ENCODE measurements at regions of chr6 and their contacts with region 1.

Region 1: GRCh38 chr6:118283766-118284165 is 264.3 kb upstream of the PLN start:
- DNase-seq: peak in 1 of 2 donors; percentile 32
- H3K4me3 ChIP-seq: peak overlapping the region in 1 of 2 donors; percentile 3
- H3K27ac ChIP-seq: peak overlapping the region in 1 of 2 donors; percentile 53
- H3K4me1 ChIP-seq: peaks cover 0 to 44% (median 20%) of the 10 kb centered on the region in 4 donors
- H3K27me3 ChIP-seq: no peaks in the 10 kb centered on the region
- CTCF ChIP-seq: peak; percentile 80

Region 2: DNA sequence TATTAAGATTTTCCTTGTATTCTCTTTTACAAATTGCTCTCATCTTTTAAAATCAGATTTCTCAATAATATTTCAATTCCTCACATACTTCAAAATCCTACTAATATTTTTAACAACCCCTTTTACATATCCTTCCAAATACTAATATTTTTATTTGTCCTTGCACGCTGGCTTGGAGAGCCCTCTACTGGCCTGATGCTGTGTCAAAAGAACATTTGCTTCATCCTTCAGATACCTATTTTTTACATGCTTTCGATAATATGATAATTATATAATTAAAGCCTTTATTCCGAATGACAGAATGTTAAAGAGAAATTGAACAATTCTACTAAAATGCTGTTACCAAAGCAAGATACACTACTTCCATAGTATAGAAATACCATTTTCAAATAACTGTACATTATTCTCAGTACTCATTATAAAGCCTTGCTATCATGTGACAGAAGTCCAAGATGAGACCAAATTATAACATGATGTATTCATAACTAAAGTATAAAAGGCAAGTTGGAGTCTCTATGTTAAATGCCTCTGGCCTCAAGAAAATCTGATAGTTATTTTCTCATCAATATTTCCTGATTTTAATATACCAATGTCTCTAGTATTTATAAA is 225.3 kb after region 1 on chr6:
- intact Hi-C with region 1: loop called (anchors 2 kb)
- DNase-seq: no peak
- H3K4me3 ChIP-seq: no peak overlapping the region
- H3K27ac ChIP-seq: no peak overlapping the region
- H3K4me1 ChIP-seq: peaks cover 0 to 57% (median 4%) of the 10 kb centered on the region in 4 donors
- H3K27me3 ChIP-seq: no peaks in the 10 kb centered on the region
- CTCF ChIP-seq: peak; percentile 69 to 71

Region 3: GRCh38 chr6:118551063-118552053 is 267.6 kb after region 1 on chr6:
- intact Hi-C with region 1: loop called (anchors 2 kb)
- DNase-seq: no peak
- H3K4me3 ChIP-seq: peak overlapping the region; percentile 58 to 59
- H3K27ac ChIP-seq: peak overlapping the region; percentile 82 to 84
- H3K4me1 ChIP-seq: peaks cover 0 to 30% (median 0%) of the 10 kb centered on the region in 4 donors
- H3K27me3 ChIP-seq: no peaks in the 10 kb centered on the region
- CTCF ChIP-seq: peak; percentile 49 to 61

Measured in tibial artery (tissue), 4 donors.